ENCODE measurements at regions of chr5 and their contacts with region 1.

Region 1: DNA sequence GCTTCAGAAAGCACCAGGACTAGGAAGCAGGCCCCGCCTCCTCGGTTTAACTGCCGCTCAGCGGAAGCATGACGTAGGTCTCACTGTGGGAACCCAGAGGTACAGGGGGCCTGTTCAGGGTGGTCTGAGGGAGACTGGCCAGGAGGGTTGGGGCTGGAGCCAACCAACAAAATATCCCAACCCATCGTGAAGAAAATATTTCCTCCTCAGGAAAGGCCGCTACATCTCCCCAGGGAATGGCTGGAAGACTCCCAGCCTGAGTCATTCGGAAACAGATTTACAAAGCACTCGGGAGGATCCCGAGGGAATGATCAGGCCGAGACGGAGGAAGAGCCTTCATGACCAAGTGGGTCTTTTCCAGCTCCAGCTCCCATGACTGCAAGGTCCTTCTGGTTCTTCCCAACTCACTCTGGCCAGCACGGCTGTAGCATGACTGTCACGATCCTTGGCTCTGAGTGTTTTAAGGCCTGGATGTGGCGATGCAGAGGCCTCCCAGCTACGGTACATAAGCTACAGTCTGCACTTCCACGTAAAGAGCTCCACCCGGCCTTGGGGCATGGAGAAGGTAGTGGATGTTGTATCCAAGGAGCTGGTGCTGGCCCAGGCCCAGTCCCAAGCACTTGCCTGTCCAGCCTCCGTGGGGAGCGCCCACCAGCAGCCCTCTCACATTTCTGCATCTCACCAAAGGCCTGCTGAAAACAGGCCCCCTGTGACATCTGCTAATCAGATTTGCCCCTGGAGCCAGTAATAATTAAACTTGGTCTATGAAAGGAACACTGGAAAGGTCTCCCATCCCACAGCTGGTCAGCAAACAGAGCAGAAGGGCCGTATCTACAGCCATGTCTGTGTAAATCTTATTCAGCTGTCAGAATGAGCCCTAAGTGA is 100.6 kb downstream of the LHFPL2 start:
- DNase-seq: peak in 1 of 2 donors; percentile 98
- H3K4me3 ChIP-seq: no peak overlapping the region
- H3K27ac ChIP-seq: peak overlapping the region; percentile 90
- H3K4me1 ChIP-seq: peaks cover 36% of the 10 kb centered on the region
- H3K27me3 ChIP-seq: no peaks in the 10 kb centered on the region
- CTCF ChIP-seq: no peak
- POLR2A ChIP-seq: peak in 1 of 2 donors; percentile 12

Region 2: GRCh38 chr5:78483809-78484521 is 64.0 kb before region 1 on chr5:
- intact Hi-C with region 1: no loop called
- DNase-seq: no peak
- H3K4me3 ChIP-seq: no peak overlapping the region
- H3K27ac ChIP-seq: no peak overlapping the region
- H3K4me1 ChIP-seq: peaks cover 15% of the 10 kb centered on the region
- H3K27me3 ChIP-seq: no peaks in the 10 kb centered on the region
- CTCF ChIP-seq: no peak
- POLR2A ChIP-seq: no peak

Region 3: DNA sequence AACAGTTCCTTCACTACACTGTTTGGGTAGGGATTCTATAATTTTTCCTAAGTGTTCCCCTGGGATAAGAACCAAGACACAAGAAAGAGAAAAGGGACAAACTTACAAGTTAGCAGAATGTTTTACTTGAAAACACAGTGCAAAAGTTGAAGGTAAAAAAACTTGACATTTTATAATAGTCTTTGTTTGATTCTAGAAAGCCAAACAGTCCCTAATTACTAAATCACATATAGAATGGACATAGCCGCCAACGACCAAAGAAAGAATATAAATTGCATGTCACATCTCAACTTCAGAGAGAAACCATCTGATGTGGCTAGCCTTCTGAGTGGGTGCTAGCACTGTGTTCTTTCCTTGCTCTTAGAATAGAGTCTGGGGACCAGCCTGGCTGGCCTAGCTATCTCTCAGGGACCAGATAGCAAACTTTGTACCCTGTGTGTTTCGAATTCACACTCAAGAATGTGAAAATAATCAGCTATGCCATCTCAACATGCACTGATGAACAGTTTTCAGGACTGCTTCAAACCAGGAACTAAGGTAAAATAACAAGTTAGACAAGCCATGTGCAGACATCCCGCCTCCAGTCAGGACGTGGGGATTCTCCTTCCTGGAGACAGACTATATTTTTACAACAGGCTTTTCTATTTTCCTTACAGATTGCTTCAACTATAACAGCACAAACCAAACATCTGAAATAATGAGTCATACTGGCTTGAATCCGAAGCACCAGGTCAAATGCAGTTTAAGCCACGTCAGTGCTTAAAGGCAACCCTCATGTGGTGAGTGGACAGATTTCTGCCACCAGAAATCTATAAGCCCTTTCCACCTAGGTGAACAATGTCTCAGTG is 46.9 kb after region 1 on chr5:
- intact Hi-C with region 1: loop called (anchors 10 kb)
- DNase-seq: no peak
- H3K4me3 ChIP-seq: no peak overlapping the region
- H3K27ac ChIP-seq: peak overlapping the region; percentile 79
- H3K4me1 ChIP-seq: peaks cover 61% of the 10 kb centered on the region
- H3K27me3 ChIP-seq: no peaks in the 10 kb centered on the region
- CTCF ChIP-seq: no peak
- POLR2A ChIP-seq: no peak